ENCODE measurements at regions of chr4 and their contacts with region 1.

Region 1: DNA sequence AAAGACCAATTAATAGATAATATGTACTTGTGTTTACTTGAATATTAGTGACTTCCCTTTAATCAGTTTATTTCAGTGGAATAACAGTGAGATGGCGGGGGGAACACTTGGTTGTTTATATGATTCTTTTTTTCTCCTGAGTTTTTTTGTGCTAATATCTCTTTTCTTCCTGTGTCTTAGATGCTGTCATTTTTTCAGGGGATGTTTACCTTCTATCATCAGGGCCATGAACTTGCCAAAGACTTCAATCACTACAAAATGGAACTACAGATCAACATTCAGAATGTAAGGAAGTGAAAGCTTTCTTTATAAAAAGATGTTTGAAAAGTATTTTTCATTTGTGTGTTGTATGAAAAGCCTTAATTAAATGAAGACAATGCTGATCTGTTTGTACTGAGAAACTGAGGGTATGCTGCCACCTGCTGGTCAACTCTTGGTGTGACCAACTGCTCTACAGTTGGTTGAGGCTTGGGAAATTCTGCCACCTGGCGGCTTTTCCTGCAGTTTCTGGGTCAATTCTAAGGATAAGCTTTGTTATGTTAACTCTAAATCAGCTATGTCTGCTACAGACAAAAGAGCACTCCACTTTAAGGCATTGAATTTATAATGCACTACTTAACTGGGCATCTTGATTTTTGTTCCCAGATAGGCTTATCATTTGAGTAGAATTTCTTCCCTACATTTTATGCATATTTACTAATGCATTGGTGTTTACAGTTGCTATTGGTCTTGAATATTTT is 134.8 kb downstream of the ARHGAP10 start:
- DNase-seq: peak; percentile 93
- H3K4me3 Mint-ChIP-seq: no peak overlapping the region
- H3K27ac Mint-ChIP-seq: peak overlapping the region; percentile 75
- H3K4me1 Mint-ChIP-seq: no peaks in the 10 kb centered on the region
- H3K27me3 Mint-ChIP-seq: no peaks in the 10 kb centered on the region
- CTCF ChIP-seq: peak; percentile 98

Region 2: DNA sequence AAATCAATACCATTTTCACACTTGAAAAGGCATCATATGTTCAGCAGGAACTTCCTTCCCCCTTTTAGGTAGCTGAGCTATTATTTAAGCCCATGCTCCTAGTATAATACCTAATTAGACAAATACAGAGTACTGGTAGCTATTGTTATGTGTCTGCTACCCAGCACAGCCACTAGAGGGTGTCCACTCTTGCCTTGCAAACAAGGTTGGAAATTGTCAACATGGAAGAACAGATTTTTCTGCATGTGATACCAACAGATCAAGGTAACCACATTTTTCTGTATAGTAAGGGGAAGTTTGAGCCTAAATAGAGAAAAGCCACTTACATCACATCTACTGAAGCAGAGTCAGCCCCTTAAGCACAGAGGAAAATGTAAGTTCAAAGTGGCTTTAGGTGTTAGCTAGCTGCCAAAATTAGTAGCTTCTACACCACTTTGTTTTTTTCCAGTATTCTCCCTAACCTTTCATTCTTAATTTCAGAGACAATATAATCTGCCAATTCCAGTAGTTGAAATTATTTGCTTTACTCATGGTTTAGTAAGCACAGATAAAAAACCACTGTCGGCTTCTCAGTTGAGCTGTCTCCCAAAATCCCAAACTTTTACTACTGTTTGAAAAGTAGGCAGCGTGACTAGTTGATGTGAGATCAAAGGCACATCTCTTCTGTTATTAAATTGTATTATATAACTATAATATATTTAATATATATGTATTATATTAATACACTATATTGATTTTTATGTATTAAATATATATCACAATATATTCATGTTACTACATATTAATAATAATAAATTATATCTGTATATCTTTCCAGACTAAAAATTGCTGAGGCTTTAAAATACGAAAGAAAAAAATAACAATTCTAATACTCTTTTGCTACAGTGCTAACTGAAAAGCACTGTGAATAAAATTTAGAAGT is 347.6 kb before region 1 on chr4:
- CTCF ChIA-PET with region 1: no interaction called
- POLR2A ChIA-PET with region 1: no interaction called
- intact Hi-C with region 1: loop called (anchors 2 kb)
- DNase-seq: peak; percentile 77
- H3K4me3 Mint-ChIP-seq: no peak overlapping the region
- H3K27ac Mint-ChIP-seq: no peak overlapping the region
- H3K4me1 Mint-ChIP-seq: peaks cover 21% of the 10 kb centered on the region
- H3K27me3 Mint-ChIP-seq: no peaks in the 10 kb centered on the region
- CTCF ChIP-seq: peak; percentile 77

Region 3: DNA sequence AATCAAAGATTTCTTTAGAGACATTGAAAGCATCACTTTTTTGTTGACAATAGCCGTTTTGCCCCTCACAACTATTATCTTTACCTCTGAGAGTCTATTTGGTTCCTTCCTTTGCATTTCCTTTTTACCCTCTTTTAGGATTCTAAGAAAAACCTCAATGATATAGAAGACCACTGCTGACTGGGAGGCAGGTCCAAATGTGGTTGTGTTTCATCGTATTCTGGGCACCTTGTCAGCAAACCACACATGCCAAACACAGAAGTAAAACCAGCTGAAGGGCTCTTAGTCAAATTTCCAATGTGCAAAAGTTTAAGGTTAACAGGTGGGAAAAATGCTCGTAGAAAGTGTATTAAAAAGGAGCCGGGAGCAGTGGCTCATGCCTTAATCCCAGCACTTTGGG is 177.6 kb before region 1 on chr4:
- CTCF ChIA-PET with region 1: interaction called, 19 read pairs
- POLR2A ChIA-PET with region 1: interaction called, 16 read pairs
- intact Hi-C with region 1: no loop called
- DNase-seq: no peak
- H3K4me3 Mint-ChIP-seq: no peak overlapping the region
- H3K27ac Mint-ChIP-seq: no peak overlapping the region
- H3K4me1 Mint-ChIP-seq: no peaks in the 10 kb centered on the region
- H3K27me3 Mint-ChIP-seq: no peaks in the 10 kb centered on the region
- CTCF ChIP-seq: no peak

Region 4: GRCh38 chr4:147731580-147732517 is 134.9 kb before region 1 on chr4 and contains the start of gene ARHGAP10:
- CTCF ChIA-PET with region 1: interaction called, 36 read pairs
- POLR2A ChIA-PET with region 1: interaction called, 24 read pairs
- intact Hi-C with region 1: loop called (anchors 1 kb)
- DNase-seq: peak; percentile 85
- H3K4me3 Mint-ChIP-seq: peak within 1 kb of the TSS; percentile 86
- H3K27ac Mint-ChIP-seq: peak within 1 kb of the TSS; percentile 50
- H3K4me1 Mint-ChIP-seq: peaks cover 40% of the 10 kb centered on the region
- H3K27me3 Mint-ChIP-seq: no peaks in the 10 kb centered on the region
- CTCF ChIP-seq: no peak
- total RNA-seq, gene ARHGAP10: 22.4 and 24.6 TPM in 2 replicates

Region 5: DNA sequence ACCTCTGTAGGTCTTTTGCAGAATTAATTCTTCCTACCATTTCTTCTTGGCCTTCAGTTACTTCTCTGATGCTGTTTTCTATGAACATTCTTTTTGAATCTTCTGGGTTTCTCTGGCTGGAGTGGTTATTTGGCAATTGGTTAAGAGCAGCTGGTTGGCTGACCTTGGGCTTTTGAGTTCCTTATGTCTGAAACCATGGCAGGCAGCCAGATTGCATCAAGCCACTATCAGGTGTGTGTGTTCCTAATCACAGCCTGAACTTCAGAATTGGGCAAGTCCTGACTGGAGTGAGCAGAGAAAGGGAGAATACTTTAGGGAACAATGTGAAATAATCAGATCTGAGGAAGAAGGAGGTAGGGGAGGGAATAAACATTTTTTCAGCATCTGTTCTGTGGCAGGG is 44.6 kb before region 1 on chr4:
- CTCF ChIA-PET with region 1: interaction called, 19 read pairs
- POLR2A ChIA-PET with region 1: interaction called, 3 read pairs
- intact Hi-C with region 1: no loop called
- DNase-seq: peak; percentile 99
- H3K4me3 Mint-ChIP-seq: peak overlapping the region; percentile 54
- H3K27ac Mint-ChIP-seq: peak overlapping the region; percentile 81
- H3K4me1 Mint-ChIP-seq: peaks cover 53% of the 10 kb centered on the region
- H3K27me3 Mint-ChIP-seq: no peaks in the 10 kb centered on the region
- CTCF ChIP-seq: no peak

Region 6: DNA sequence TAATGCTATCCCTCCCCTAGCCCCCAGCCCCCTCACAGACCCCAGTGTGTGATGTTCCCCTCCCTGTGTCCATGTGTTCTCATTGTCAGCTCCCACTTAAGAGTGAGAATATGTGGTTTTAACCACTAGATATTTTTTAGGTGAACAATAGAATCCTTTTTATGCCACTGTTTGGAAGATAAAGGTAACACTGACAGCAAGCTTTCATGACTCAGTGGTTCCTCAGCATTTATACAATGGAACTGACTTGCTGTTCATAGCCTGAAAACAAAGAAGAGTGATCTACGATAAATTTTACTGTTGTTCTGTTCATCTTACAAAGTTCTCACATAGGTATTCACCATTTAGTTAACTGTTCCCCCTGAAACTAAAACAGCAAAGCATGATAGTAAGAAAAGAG is 13.0 kb after region 1 on chr4:
- CTCF ChIA-PET with region 1: interaction called, 73 read pairs
- POLR2A ChIA-PET with region 1: interaction called, 3 read pairs
- intact Hi-C with region 1: no loop called
- DNase-seq: no peak
- H3K4me3 Mint-ChIP-seq: no peak overlapping the region
- H3K27ac Mint-ChIP-seq: no peak overlapping the region
- H3K4me1 Mint-ChIP-seq: no peaks in the 10 kb centered on the region
- H3K27me3 Mint-ChIP-seq: no peaks in the 10 kb centered on the region
- CTCF ChIP-seq: no peak

Region 7: GRCh38 chr4:148565801-148566200 is 699.1 kb after region 1 on chr4:
- CTCF ChIA-PET with region 1: no interaction called
- POLR2A ChIA-PET with region 1: no interaction called
- intact Hi-C with region 1: no loop called
- DNase-seq: no peak
- H3K4me3 Mint-ChIP-seq: no peak overlapping the region
- H3K27ac Mint-ChIP-seq: no peak overlapping the region
- H3K4me1 Mint-ChIP-seq: no peaks in the 10 kb centered on the region
- H3K27me3 Mint-ChIP-seq: no peaks in the 10 kb centered on the region
- CTCF ChIP-seq: no peak